Right ventricle myocardium superior (tissue), 1 donor: ENCODE measurements at regions of chr2 and their contacts with region 1.

Region 1: DNA sequence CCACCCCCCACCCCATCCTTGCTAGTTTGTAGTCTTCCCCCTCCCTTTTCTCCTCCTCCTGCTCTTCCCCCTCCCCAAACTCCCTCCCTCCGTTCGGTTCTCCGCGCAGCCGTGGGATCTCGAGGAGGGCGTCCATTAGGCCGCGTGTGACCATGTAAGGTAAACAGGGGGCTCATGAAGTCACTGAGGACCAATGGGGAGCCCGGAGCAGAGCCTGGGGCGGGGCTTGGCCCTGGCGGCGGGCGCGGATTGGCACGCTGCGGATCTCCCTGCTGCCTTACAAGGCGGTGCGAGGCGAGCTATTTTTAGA is 246 bp upstream of the KLF7 start:
- DNase-seq: peak; percentile 99
- ATAC-seq: peak; percentile 91

Region 2: DNA sequence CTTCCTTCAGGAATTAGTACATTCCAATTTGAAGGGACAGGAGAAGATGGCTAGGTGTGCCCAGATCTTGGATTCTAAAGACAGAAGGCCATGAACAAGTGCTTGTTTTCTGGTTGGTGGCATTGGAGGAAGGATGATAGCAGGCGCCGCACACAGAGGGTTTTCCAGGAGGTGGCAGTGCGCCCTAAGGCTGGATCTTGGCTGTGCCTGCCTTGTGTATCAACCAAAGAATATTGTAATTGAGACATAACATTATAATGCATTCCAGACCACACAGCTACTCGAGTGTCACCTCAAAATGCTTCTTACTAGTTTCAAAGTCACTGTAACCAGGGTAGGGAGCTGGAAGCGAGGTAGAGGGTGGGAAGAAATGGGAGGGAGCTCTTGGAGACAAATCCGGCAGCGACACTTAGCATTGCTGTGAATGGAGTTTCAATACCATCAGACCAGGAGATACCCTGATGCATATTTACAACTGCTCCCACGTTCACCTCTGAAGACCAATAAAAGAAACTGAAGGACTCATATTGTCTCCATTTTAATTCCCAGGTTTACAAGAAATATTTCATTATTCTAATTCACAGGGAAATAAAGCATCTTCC is 184.2 kb before region 1 on chr2:
- intact Hi-C with region 1: loop called (anchors 10 kb)
- DNase-seq: peak; percentile 84
- ATAC-seq: peak; percentile 93

Region 3: GRCh38 chr2:207086136-207086535 is 79.9 kb before region 1 on chr2:
- intact Hi-C with region 1: loop called (anchors 5 kb)
- DNase-seq: peak; percentile 43
- ATAC-seq: peak; percentile 79

Region 4: DNA sequence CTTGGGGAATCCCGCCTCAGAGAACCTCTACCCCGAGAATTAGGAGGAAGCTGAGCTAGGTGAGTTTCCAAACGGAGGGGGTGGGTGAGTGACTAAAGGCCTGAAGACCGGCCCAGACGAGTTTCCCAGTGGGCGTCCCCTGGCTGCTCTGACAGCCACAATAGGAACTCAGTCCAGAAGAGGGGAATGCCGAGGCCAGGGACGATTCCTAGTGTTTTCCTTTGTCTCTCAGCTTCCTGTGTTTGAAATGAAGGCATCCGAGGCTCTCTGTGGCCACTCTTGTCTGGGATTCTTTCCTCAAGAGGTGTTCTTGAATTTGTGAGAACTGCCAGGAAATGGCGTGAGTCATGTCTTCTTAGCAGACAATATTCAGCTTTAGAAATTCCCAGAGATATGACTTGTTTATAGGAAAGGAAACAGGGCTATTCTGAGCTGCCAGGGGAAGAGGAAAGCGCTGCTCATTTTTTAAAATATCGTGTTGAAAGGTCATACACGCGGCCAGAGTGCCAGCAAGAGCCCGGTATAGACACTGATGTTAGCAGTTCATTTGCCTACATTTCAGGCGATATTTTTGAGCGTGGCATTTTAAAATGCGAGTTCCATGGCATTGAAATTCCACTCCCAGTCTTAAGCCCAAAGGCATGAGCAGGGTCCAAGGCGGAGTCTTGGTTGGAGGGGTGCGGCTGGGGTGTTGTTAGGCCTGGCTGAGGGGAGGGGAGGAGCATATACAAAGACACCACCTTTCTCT is 168.8 kb after region 1 on chr2:
- intact Hi-C with region 1: loop called (anchors 5 kb)
- DNase-seq: peak; percentile 67
- ATAC-seq: peak; percentile 72